CD14-positive monocyte (primary cell): ENCODE measurements at regions of chr3 and their contacts with region 1.

Region 1: GRCh38 chr3:143972505-143973255 is 1.1 kb downstream of the DIPK2A start:
- DNase-seq: peak; percentile 84 to 90 (median 87)
- H3K4me3 ChIP-seq: peak overlapping the region; percentile 69 to 94 (median 92)
- H3K4me3 Mint-ChIP-seq: peak overlapping the region; percentile 91 to 99
- H3K27ac ChIP-seq: peak overlapping the region; percentile 92 to 99
- H3K27ac Mint-ChIP-seq: peak overlapping the region; percentile 91 to 99 (median 97)
- H3K4me1 ChIP-seq: peaks cover 27 to 61% of the 10 kb centered on the region in 2 donors
- H3K4me1 Mint-ChIP-seq: peaks cover 35% of the 10 kb centered on the region
- H3K27me3 ChIP-seq: no peaks in the 10 kb centered on the region
- H3K27me3 Mint-ChIP-seq: peaks cover 0 to 2% (median 0%) of the 10 kb centered on the region in 3 donors
- CTCF ChIP-seq: peak; percentile 68

Region 2: DNA sequence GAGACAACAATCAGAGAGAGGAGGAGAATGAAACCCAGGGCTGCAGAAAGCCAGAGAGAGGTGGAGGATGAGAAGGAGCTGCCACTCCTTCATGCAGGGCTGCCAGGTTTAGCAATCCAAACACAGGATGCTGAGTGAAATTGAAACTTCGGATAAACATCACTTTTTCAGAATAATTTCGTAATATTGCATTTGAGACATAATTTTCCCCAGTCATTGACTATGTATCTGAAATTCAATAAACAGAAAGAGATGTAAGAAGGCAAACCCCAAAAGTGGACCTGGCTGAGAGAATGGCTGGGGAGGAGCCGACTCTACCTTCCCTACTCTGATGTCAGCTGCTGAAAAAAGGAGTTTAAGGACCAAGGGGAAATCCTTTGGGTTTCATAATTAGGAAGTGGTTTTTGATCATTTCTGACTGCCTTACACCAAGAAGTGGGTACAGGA is 158.2 kb before region 1 on chr3:
- intact Hi-C with region 1: loop called in 1 of 2 experiments (anchors 10 kb)
- DNase-seq: peak; percentile 61 to 85 (median 69)
- H3K4me3 ChIP-seq: peak overlapping the region in 2 of 3 experiments; percentile 15 to 50
- H3K4me3 Mint-ChIP-seq: peak overlapping the region; percentile 61 to 91
- H3K27ac ChIP-seq: peak overlapping the region; percentile 80 to 84
- H3K27ac Mint-ChIP-seq: peak overlapping the region; percentile 95 to 99 (median 98)
- H3K4me1 ChIP-seq: peaks cover 62 to 66% of the 10 kb centered on the region in 2 donors
- H3K4me1 Mint-ChIP-seq: peaks cover 65% of the 10 kb centered on the region
- H3K27me3 ChIP-seq: no peaks in the 10 kb centered on the region
- H3K27me3 Mint-ChIP-seq: no peaks in the 10 kb centered on the region
- CTCF ChIP-seq: no peak

Region 3: GRCh38 chr3:144028798-144029411 is 56.2 kb after region 1 on chr3:
- intact Hi-C with region 1: loop called (anchors 5 to 10 kb)
- DNase-seq: peak; percentile 82 to 91 (median 89)
- H3K4me3 ChIP-seq: peak overlapping the region in 1 of 3 experiments; percentile 37
- H3K4me3 Mint-ChIP-seq: peak overlapping the region in 1 of 2 donors; percentile 61
- H3K27ac ChIP-seq: peak overlapping the region; percentile 61 to 81
- H3K27ac Mint-ChIP-seq: peak overlapping the region; percentile 82 to 96 (median 94)
- H3K4me1 ChIP-seq: peaks cover 16% of the 10 kb centered on the region in 2 donors
- H3K4me1 Mint-ChIP-seq: peaks cover 22% of the 10 kb centered on the region
- H3K27me3 ChIP-seq: no peaks in the 10 kb centered on the region
- H3K27me3 Mint-ChIP-seq: peaks cover 1 to 5% (median 2%) of the 10 kb centered on the region in 3 donors
- CTCF ChIP-seq: no peak